Activated CD4-positive, alpha-beta T cell treated with anti-CD3 and anti-CD28 coated beads for 36 hours (primary cell): ENCODE measurements at regions of chr7 and their contacts with region 1.

Region 1: DNA sequence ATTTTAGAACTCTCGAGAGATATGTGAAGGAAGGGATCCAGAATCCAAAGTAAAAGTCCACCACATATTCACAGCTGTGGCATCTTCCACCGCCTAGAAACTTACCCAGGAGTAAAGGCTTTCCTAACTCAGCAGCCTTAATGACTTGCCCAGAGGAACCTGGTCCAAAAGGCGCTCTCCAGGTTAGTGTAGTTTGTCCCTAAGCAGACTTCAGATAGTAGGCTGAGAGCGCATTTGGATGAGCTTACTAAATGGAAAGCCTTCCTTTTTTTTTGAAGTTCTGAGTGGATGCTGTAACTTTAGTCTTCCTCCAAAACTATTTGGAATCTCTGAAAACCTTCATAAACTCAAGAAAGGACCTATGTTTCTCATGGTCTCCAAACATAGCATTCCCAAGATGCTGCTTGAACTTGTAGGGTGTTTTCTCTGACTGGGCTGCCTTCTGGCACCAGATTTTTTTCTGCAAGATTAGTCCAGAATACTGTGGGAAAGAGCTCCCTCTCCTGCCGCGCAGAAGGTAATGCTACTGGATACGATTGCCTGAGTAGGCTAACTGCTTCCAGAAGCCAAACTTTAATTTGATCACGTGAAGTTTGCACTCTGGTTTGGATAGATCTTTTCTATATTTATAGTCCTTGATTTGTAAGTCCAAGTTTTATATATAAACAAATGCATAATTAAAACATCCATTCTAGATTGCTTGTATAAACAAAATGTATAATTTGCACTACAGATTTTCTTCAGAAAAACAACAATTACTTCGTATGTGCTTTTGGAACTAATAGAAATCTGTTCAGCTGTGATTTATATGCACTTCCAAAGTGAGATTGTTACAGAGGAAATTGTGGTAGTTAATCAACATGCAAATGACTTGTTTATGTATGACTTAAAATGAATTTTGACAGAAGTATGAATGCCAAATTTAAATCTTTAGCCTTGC is 19.6 kb upstream of the GPR37 start:
- DNase-seq: peak; percentile 47
- ATAC-seq: peak; percentile 44
- H3K4me3 Mint-ChIP-seq: no peak overlapping the region
- H3K27ac Mint-ChIP-seq: no peak overlapping the region
- H3K4me1 Mint-ChIP-seq: no peaks in the 10 kb centered on the region
- H3K27me3 Mint-ChIP-seq: peaks cover 7% of the 10 kb centered on the region

Region 2: DNA sequence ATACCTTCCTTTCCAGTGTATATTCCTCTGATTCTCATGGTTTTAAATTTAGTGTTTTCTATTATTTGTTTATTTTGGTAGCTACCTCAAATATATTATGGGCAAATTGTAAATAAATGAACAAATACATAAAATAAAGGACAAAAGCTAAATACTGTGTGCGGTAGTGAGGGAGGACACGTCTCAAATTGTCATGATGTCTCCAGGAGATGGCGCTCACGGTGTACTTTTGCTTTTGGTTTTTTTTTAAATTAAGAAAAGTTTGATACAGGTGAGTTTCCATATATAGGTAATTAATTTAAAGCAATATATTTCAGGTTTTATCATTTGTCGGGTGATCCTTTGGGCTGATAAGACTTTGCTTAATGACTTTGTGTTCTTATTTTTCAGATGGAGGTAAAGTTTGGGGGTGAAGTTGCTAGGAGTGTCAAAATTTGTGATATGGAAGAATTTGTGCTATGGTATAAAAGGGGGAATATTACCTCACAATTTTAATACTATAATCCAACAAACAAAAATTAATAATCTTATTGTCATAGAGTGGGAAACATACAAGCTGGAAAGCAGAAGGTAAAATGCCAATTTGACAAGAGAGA is 683.9 kb before region 1 on chr7:
- CTCF ChIA-PET with region 1: no interaction called
- POLR2A ChIA-PET with region 1: no interaction called
- intact Hi-C with region 1: loop called (anchors 1 to 5 kb)
- DNase-seq: peak; percentile 25
- ATAC-seq: no peak
- H3K4me3 Mint-ChIP-seq: no peak overlapping the region
- H3K27ac Mint-ChIP-seq: no peak overlapping the region
- H3K4me1 Mint-ChIP-seq: no peaks in the 10 kb centered on the region
- H3K27me3 Mint-ChIP-seq: no peaks in the 10 kb centered on the region

Region 3: DNA sequence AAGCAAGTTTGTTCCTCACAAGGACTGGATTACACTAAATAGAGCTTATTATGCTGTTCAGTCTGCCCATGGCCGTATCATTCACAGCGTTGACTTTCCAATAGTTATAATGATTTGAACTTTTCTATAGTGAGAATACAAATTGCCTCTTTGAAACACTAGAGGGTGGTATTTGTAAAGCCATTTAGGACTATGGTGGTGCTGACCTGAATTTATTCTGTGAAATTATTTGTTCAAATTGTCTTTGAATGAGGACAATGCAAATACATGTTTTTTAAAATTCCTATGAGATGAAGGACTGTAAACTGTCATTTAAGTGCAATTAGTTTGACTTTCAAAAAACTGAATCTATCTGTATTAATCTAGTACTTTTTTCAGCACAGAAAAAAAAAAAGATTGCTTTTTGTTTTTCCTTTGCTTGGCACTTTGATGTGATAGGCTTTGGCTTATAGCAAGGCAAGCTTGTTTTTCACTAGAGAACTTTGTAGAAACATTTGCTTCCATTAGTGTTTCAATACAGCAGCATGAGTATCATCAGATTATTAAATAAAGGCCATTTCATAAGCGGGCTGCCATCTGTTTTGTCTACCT is 629.6 kb before region 1 on chr7:
- CTCF ChIA-PET with region 1: no interaction called
- POLR2A ChIA-PET with region 1: no interaction called
- intact Hi-C with region 1: loop called (anchors 2 to 10 kb)
- DNase-seq: no peak
- ATAC-seq: no peak
- H3K4me3 Mint-ChIP-seq: no peak overlapping the region
- H3K27ac Mint-ChIP-seq: no peak overlapping the region
- H3K4me1 Mint-ChIP-seq: no peaks in the 10 kb centered on the region
- H3K27me3 Mint-ChIP-seq: no peaks in the 10 kb centered on the region

Region 4: DNA sequence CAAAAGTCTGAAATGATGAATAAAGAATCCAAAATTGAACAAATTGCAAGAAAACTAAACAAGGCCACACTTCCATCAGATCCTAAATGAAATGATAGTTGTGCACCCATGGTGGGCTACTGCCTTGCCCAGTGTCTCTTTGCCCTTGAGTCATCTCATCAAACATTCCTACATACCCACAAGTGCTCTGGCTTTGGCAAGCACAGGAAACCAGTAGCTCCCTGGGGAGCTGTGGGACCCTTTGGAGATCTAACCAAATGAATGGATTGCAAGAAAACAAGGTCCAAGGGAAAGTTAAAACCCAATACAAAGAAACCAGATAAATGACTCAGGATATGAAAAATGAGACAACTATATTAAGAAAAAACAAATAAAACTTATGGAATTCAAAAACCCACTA is 622.5 kb before region 1 on chr7:
- CTCF ChIA-PET with region 1: no interaction called
- POLR2A ChIA-PET with region 1: no interaction called
- intact Hi-C with region 1: loop called in 1 of 2 experiments (anchors 10 kb)
- DNase-seq: no peak
- ATAC-seq: no peak
- H3K4me3 Mint-ChIP-seq: no peak overlapping the region
- H3K27ac Mint-ChIP-seq: no peak overlapping the region
- H3K4me1 Mint-ChIP-seq: no peaks in the 10 kb centered on the region
- H3K27me3 Mint-ChIP-seq: no peaks in the 10 kb centered on the region

Region 5: GRCh38 chr7:124801330-124801895 is 16.3 kb after region 1 on chr7:
- CTCF ChIA-PET with region 1: no interaction called
- POLR2A ChIA-PET with region 1: no interaction called
- intact Hi-C with region 1: no loop called
- DNase-seq: no peak
- ATAC-seq: no peak
- H3K4me3 Mint-ChIP-seq: no peak overlapping the region
- H3K27ac Mint-ChIP-seq: no peak overlapping the region
- H3K4me1 Mint-ChIP-seq: no peaks in the 10 kb centered on the region
- H3K27me3 Mint-ChIP-seq: peaks cover 10% of the 10 kb centered on the region

Region 6: DNA sequence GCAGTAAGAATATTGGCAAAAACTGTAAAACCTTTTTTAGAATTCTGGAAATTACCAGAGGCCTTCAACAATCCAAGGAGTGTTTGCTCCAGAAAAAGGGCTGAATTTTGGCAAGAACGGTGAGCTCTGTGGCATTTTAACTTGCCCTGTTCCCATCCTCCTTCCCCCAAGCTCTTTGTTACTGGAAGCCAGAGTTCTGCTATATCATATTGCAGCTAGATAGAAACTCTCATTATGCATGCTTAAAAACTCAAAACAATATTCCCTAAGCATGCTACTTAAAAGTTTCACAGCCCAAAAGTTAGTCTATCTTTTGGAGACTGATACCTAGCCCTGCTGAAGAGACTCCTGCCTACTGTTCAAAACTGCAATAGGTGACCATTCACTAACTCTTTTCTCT is 51.0 kb after region 1 on chr7:
- CTCF ChIA-PET with region 1: no interaction called
- POLR2A ChIA-PET with region 1: no interaction called
- intact Hi-C with region 1: no loop called
- DNase-seq: no peak
- ATAC-seq: no peak
- H3K4me3 Mint-ChIP-seq: no peak overlapping the region
- H3K27ac Mint-ChIP-seq: no peak overlapping the region
- H3K4me1 Mint-ChIP-seq: no peaks in the 10 kb centered on the region
- H3K27me3 Mint-ChIP-seq: no peaks in the 10 kb centered on the region